ENCODE measurements at regions of chr22 and their contacts with region 1.

Region 1: DNA sequence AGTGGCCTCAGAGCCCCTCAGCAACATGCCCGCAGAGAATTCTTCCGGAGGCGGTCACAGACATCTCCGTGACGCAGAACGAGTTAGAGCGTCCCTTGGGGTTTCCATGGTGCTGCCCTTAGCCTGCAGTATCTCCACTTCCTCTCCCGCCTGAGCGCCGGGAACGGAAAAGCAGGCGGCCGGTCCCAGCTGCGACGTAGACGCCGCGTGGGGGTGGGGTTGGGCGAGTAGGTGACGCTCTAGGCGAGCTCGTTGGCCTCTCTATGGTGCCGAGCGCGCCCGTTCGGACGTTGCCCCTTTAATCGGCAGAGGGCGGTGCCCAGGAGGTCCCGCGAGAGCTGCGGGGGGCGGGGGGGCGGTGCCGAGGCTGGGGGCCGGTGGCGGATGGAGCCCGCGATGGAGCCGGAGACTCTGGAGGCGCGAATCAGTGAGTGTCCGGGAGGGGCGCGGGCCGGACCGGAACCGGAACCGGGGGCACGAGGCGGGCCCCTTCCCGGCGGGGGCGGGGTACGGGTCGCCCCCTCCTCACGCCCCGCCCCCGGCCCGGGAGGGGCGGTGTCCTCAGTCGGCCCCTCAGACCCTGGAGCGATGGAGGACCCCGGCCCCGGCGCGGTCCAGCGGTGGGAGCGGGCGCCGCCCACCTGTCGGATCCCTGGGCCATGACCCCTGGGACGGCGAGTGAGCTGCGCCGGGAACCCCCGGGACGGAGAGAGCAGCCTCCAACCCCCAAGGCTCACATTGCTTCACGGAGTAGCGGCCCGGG is at the start of gene GGA1:
- DNase-seq: peak; percentile 83
- H3K4me3 ChIP-seq: peak within 1 kb of the TSS; percentile 86
- CTCF ChIP-seq: no peak

Region 2: DNA sequence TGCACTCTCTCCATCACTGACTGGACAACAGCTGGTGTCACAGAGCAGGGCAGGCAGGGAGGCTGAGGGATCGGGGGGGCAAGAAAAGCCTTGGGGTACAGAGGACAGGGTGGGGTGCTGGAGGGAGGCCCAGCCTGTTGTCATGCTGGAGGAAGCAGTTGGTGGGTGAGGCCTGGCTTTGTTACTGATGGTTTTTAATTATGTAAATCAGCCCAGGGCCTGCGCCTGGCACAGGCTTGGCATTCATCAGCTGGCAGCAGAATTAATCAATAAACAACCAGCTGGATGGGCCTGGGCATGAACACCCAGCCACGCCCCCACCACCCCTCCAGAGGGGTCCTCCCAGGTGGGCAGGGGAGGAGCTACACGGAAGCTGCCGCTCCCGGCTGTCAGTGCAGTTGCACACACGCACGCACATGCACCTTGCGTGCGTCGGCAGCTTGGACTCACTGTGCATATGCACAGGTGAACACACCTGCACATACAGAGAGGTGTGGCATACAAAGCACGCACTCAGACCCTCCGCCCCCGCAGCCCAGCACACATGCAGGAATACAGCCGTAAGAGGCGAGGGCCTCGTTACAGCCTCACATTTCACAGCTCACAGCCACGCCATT is 160.0 kb before region 1 on chr22:
- CTCF ChIA-PET with region 1: no interaction called
- POLR2A ChIA-PET with region 1: no interaction called
- DNase-seq: no peak
- H3K4me3 ChIP-seq: no peak overlapping the region
- CTCF ChIP-seq: no peak

Region 3: DNA sequence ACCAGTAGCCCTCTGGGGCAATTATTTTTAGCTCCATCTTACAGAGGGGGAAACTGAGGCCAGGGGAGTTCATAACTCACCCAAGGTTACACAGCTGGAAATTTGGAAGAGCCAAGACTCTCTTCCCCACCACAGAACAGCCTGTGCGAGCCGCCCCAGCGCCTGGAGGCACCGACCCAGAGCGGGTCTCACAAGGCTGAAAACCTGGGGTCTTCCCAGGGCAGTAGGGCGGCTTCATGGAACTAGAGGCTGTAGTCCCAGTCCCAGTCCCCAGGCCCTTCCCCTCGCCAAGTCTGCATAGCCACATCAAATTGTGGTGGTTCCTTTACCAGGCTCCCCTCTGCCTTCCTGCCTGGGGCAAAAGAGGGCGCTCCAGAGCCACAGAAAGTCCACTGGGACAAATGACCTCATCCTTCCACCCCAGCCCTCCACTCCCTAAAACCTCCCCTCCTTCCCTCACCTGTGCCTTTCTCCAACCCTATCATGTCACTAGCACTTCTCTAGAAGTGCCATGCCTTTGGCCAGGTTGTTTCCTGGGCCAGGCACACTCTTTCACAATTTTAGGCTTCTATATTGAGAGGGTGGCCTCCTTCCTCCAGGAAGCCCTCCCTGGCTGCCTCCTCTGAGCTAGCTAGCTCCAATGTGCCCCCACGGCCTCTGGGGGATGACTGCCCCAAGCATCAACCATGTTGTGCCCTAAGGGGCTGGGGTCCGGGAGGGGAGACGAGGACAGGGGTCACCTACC is 63.5 kb before region 1 on chr22:
- CTCF ChIA-PET with region 1: interaction called, 297 read pairs
- POLR2A ChIA-PET with region 1: interaction called, 11 read pairs
- DNase-seq: no peak
- H3K4me3 ChIP-seq: peak overlapping the region; percentile 42
- CTCF ChIP-seq: peak; percentile 87

Region 4: DNA sequence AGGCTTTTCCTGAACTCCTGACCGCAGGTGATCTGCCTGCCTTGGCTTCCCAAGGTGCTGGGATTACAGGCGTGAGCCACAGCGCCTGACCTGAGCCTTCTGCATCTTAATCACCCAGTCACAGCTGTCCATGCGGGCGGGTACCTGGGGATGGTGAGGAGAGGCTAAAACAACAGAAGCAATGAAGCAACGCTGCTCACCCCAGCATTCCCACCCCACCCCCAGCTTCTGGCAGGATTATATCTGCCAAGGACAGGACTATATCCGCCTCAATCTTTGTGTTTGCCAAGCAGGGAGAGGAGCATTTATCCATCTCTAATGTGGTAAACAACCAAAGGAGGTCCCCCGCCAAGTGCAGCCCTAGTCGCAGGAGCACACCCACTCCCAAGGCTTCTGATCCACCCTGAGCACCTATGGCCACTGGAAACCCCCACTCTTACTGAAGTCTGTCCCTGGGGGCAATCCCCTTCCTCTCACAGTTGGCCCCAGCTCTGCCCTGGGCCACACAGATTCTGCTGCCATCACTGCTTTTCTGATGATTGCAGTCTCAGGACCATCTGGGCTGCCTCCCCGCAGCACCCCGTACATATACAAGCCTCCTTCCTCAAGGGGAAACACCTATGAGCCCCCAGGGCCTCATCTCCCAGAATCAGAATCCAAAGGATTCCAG is 20.0 kb before region 1 on chr22:
- CTCF ChIA-PET with region 1: interaction called, 174 read pairs
- POLR2A ChIA-PET with region 1: interaction called, 8 read pairs
- DNase-seq: no peak
- H3K4me3 ChIP-seq: no peak overlapping the region
- CTCF ChIP-seq: no peak

Region 5: GRCh38 chr22:37633625-37634416 is 25.2 kb after region 1 on chr22:
- CTCF ChIA-PET with region 1: interaction called, 454 read pairs
- POLR2A ChIA-PET with region 1: interaction called, 7 read pairs
- DNase-seq: peak; percentile 42
- H3K4me3 ChIP-seq: no peak overlapping the region; the same call in 1 of the 2 replicates
- CTCF ChIP-seq: peak; percentile 39

Region 6: GRCh38 chr22:37676736-37677492 is 68.3 kb after region 1 on chr22:
- CTCF ChIA-PET with region 1: interaction called, 9 read pairs
- POLR2A ChIA-PET with region 1: interaction called, 18 read pairs
- DNase-seq: peak; percentile 87
- H3K4me3 ChIP-seq: peak overlapping the region; percentile 97
- CTCF ChIP-seq: no peak

Region 7: GRCh38 chr22:37792494-37792893 is 183.8 kb after region 1 on chr22:
- CTCF ChIA-PET with region 1: interaction called, 16 read pairs
- POLR2A ChIA-PET with region 1: no interaction called
- DNase-seq: no peak
- H3K4me3 ChIP-seq: no peak overlapping the region
- CTCF ChIP-seq: no peak

Region 8: GRCh38 chr22:37824674-37825641 is 216.3 kb after region 1 on chr22:
- CTCF ChIA-PET with region 1: no interaction called
- POLR2A ChIA-PET with region 1: no interaction called
- DNase-seq: no peak
- H3K4me3 ChIP-seq: peak overlapping the region; percentile 46
- CTCF ChIP-seq: no peak

Region 9: GRCh38 chr22:37880668-37881440 is 272.2 kb after region 1 on chr22:
- CTCF ChIA-PET with region 1: no interaction called
- POLR2A ChIA-PET with region 1: no interaction called
- DNase-seq: no peak
- H3K4me3 ChIP-seq: no peak overlapping the region
- CTCF ChIP-seq: no peak